ENCODE measurements at regions of chr6 and their contacts with region 1.

Region 1: DNA sequence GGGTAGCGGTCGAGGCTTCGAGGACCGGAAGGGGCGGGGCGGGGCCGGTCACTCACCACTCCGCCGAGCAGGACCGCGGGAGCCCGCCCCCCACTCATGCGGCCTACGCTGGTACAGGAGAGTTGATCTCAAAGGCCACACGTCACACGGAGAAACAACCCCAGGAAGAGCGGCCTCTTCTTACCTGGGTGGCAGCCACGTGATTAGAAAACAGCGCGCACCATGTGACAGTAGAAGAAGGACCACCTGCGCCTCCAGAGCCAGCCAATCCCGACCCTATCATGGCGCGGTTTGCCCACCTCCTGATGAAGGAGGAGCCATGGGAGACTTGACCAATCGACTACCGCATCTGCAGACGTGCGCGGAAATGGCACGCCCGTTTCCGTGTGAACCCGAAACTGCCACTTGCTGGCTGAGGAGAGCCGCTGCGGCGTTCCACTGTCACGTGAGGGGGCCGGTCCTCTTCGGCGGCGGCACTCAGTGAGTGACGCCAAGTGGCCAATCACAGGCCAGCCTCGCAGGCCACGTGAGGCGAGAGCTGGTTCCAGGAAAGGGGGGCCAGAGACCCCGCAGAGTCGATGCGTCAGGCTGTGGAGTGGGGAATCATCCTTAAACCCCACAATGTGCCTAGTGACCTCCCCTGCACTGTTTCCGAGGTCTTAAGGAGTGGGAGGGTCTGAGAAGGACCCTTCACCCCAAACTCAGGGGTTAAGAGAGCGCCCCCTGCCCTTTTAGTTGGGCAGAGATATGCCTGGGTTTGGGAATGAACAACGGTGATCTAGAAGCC is at the start of gene CUTA:
- DNase-seq: peak; percentile 99
- H3K4me3 ChIP-seq: peak within 1 kb of the TSS; percentile 60 to 75 (median 72)
- H3K27ac ChIP-seq: peak within 1 kb of the TSS; percentile 91 to 96 (median 94)
- H3K4me1 ChIP-seq: peaks cover 19 to 50% (median 34%) of the 10 kb centered on the region in 4 donors
- H3K27me3 ChIP-seq: no peaks in the 10 kb centered on the region
- CTCF ChIP-seq: peak in 2 of 5 experiments; percentile 20 to 42
- EP300 ChIP-seq: no peak
- POLR2A ChIP-seq: peak; percentile 75
- total RNA-seq, gene CUTA: 18.9 to 134 (median 91.3) TPM

Region 2: DNA sequence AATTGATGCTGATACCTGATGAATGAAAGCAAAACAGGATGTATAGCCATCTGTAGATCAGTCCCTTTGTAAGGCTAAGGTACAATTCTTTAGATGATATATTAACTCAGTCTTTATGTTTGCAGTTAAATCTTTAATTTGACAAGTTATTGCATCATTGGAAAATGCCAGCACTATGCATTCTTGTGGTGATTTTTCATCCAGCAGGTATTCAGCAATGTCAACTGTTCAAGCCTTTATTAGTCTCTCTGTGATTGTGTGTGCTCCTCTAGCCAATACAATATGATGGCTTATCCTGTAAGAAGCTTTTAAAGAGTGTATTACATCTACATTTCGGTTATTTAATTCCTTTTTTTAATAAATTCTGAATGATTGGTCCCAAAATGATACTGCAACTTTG is 511.6 kb before region 1 on chr6:
- in situ Hi-C with region 1: no loop called
- intact Hi-C with region 1: no loop called
- DNase-seq: no peak
- H3K4me3 ChIP-seq: no peak overlapping the region
- H3K27ac ChIP-seq: no peak overlapping the region
- H3K4me1 ChIP-seq: peaks cover 0 to 6% (median 0%) of the 10 kb centered on the region in 4 donors
- H3K27me3 ChIP-seq: no peaks in the 10 kb centered on the region
- CTCF ChIP-seq: no peak
- EP300 ChIP-seq: no peak
- POLR2A ChIP-seq: no peak

Region 3: DNA sequence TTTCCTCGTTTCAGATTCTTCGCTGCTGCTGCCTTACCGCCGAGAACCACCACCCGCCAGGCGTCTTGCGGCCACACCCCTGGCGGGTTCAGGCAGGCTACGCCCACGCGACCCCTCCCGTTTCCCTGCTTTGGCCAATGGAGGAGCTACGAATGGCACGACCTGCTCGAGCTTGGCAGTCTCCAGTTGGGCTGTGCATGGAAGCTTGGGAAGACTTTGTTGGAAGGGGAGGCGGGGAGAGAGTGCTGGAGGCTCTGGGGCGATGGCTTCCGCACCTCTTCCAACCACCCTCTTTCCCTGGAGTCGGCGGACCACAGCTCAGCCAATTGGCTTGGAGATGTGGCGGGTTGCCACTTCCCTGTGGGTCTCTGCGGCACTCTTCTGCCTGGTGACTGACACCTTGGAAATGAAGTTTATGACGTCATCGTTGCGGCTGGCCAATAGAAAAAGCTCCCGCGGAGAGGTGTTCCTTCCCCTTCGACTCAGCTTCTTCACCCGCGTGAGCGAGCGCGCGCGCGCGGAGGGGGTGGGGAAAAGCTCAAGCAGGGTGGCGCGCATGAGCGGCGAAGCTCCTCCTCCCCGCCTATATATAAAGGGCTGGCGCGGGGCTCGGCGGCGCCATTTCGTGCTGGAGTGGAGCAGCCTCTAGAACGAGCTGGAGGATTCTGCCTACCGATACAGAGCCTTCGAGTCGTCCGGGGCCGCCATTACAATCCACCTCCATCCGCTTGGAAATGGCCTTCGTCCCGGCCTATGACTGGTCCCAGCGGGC is 446.3 kb before region 1 on chr6:
- in situ Hi-C with region 1: loop called in 1 of 4 experiments (anchors 25 kb)
- intact Hi-C with region 1: no loop called
- DNase-seq: peak; percentile 100
- H3K4me3 ChIP-seq: peak overlapping the region; percentile 63 to 86 (median 84)
- H3K27ac ChIP-seq: peak overlapping the region; percentile 98 to 100 (median 99)
- H3K4me1 ChIP-seq: peaks cover 25 to 40% (median 33%) of the 10 kb centered on the region in 4 donors
- H3K27me3 ChIP-seq: no peaks in the 10 kb centered on the region
- CTCF ChIP-seq: peak in 2 of 5 experiments; percentile 3 to 26
- EP300 ChIP-seq: peak; percentile 23
- POLR2A ChIP-seq: peak; percentile 100

Region 4: GRCh38 chr6:33271458-33272274 is 146.4 kb before region 1 on chr6 and contains the starts of genes RPS18 and VPS52:
- in situ Hi-C with region 1: no loop called
- intact Hi-C with region 1: no loop called
- DNase-seq: peak; percentile 94
- H3K4me3 ChIP-seq: peak within 1 kb of the TSS; percentile 54 to 85 (median 67)
- H3K27ac ChIP-seq: peak within 1 kb of the TSS; percentile 91 to 97 (median 94)
- H3K4me1 ChIP-seq: peaks cover 28 to 54% (median 47%) of the 10 kb centered on the region in 4 donors
- H3K27me3 ChIP-seq: no peaks in the 10 kb centered on the region
- CTCF ChIP-seq: peak in 1 of 5 experiments; percentile 39
- EP300 ChIP-seq: no peak
- POLR2A ChIP-seq: peak; percentile 98
- total RNA-seq, gene RPS18: 773 to 2,238 (median 1,359) TPM
- total RNA-seq, gene VPS52: 52.4 to 93.3 (median 63.4) TPM

Region 5: GRCh38 chr6:33317669-33318425 is 100.2 kb before region 1 on chr6 and contains the start of gene ZBTB22:
- in situ Hi-C with region 1: no loop called
- intact Hi-C with region 1: loop called (anchors 10 kb)
- DNase-seq: peak; percentile 100
- H3K4me3 ChIP-seq: peak within 1 kb of the TSS; percentile 36 to 61 (median 46)
- H3K27ac ChIP-seq: peak within 1 kb of the TSS; percentile 86 to 94 (median 90)
- H3K4me1 ChIP-seq: peaks cover 28 to 66% (median 56%) of the 10 kb centered on the region in 4 donors
- H3K27me3 ChIP-seq: no peaks in the 10 kb centered on the region
- CTCF ChIP-seq: no peak
- EP300 ChIP-seq: peak; percentile 26
- POLR2A ChIP-seq: peak; percentile 38
- total RNA-seq, gene ZBTB22: 10.1 to 31.8 (median 17.2) TPM

Region 6: GRCh38 chr6:35048631-35049083 is 1630.6 kb after region 1 on chr6:
- in situ Hi-C with region 1: no loop called
- intact Hi-C with region 1: loop called (anchors 5 kb)
- DNase-seq: peak; percentile 50
- H3K4me3 ChIP-seq: no peak overlapping the region
- H3K27ac ChIP-seq: peak overlapping the region; percentile 85 to 91 (median 90)
- H3K4me1 ChIP-seq: peaks cover 75 to 99% (median 79%) of the 10 kb centered on the region in 4 donors
- H3K27me3 ChIP-seq: no peaks in the 10 kb centered on the region
- CTCF ChIP-seq: peak in 2 of 5 experiments; percentile 18 to 21
- EP300 ChIP-seq: no peak
- POLR2A ChIP-seq: peak; percentile 43